Heart left ventricle (tissue), 16 donors: ENCODE measurements at regions of chr9 and their contacts with region 1.

Region 1: DNA sequence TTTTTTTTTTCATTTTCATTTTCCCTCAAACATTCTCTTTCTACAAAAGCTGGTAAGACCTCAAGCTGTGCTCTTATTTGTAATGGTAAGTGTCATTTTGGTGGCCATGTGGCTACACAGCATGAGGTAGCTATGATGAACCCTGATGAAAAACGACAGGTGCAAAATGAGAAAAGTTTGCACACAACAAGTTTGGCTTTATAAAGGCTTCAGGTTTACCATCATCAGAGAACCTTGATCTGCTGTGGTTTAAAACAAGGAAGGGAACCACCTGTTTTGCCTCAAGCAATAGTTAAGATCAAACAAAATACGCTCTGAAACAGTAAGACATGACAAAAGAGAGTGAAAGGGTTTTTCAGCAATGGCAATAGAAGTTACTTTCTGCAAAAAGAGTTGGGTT is 1124.6 kb upstream of the ACO1 start:
- DNase-seq: no peak
- ATAC-seq: no peak
- H3K4me3 ChIP-seq: no peak overlapping the region
- H3K27ac ChIP-seq: no peak overlapping the region
- H3K4me1 ChIP-seq: no peaks in the 10 kb centered on the region
- H3K27me3 ChIP-seq: no peaks in the 10 kb centered on the region
- CTCF ChIP-seq: no peak
- POLR2A ChIP-seq: no peak

Region 2: DNA sequence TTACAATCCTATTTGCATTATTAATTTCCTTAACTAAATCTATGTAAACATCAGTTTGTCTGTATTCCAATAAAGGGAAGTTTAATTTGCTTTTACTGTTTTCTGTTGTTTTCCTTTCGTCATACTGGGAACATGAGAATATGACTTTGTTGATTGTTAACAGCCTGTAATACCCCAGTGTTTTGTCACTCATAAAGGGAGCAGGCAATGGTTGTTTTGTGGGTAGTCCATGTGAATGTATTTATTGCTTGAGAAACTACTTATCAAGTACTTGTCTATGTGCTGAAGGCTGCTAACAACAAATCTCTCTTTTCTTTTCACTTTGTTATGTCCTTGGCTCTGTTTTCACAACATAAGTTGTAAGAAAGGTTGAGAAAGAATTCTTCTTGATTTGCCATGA is 54.4 kb after region 1 on chr9:
- intact Hi-C with region 1: loop called in 2 of 10 experiments (anchors 10 kb)
- DNase-seq: no peak
- ATAC-seq: no peak
- H3K4me3 ChIP-seq: no peak overlapping the region
- H3K27ac ChIP-seq: no peak overlapping the region
- H3K4me1 ChIP-seq: no peaks in the 10 kb centered on the region
- H3K27me3 ChIP-seq: no peaks in the 10 kb centered on the region
- CTCF ChIP-seq: no peak
- POLR2A ChIP-seq: no peak

Region 3: GRCh38 chr9:31323726-31324444 is 64.1 kb after region 1 on chr9:
- intact Hi-C with region 1: loop called in 3 of 10 experiments (anchors 10 kb)
- DNase-seq: no peak
- ATAC-seq: no peak
- H3K4me3 ChIP-seq: no peak overlapping the region
- H3K27ac ChIP-seq: peak overlapping the region in 1 of 12 donors; percentile 59
- H3K4me1 ChIP-seq: no peaks in the 10 kb centered on the region
- H3K27me3 ChIP-seq: no peaks in the 10 kb centered on the region
- CTCF ChIP-seq: no peak
- POLR2A ChIP-seq: no peak

Region 4: DNA sequence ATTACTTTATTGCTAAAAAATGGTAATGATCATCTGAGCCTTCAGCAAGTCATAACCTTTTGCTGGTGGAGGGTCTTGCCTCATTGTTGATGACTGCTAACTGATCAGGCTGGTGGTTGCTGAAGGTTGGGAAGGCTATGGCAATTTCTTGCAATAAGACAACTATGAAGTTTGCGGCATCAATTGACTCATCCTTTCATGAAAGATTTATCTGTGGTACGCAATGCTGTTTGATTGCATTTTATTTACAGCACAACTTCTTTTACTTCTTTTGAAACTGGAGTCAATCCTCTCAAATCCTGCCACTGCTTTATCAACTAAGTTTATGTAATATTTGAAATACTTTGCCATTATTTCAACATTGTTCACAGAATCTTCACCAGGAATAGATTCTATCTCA is 1066.3 kb after region 1 on chr9:
- intact Hi-C with region 1: loop called in 1 of 10 experiments (anchors 10 kb)
- DNase-seq: no peak
- ATAC-seq: no peak
- H3K4me3 ChIP-seq: no peak overlapping the region
- H3K27ac ChIP-seq: no peak overlapping the region
- H3K4me1 ChIP-seq: no peaks in the 10 kb centered on the region
- H3K27me3 ChIP-seq: peaks cover 0 to 3% (median 0%) of the 10 kb centered on the region in 9 donors
- CTCF ChIP-seq: no peak
- POLR2A ChIP-seq: no peak